ENCODE measurements at regions of chr20 and their contacts with region 1.

Region 1: DNA sequence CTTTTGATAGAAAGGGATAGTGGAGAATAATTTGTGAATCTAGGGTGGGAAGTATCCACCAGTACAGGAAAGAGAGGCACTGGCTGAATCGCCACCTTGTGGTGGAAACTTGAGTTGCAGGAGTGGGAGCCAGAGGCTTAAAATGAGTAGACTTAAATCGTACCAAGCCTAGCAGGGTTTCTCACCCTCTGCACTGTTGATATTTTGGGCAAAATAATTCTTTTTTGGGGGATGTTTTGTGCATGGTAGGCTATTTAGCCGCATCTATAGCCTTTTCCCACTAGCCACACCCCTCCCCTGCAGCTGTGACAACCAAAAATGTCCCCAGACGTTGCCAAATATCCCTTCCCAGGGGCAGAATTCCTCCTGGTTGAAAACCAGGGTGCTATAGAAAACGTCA is 119.1 kb downstream of the DHX35 start:
- DNase-seq: peak; percentile 59 to 87 (median 80)
- ATAC-seq: peak; percentile 76
- H3K4me3 ChIP-seq: no peak overlapping the region
- H3K4me3 Mint-ChIP-seq: no peak overlapping the region
- H3K27ac ChIP-seq: no peak overlapping the region
- H3K27ac Mint-ChIP-seq: no peak overlapping the region
- H3K4me1 ChIP-seq: no peaks in the 10 kb centered on the region
- H3K4me1 Mint-ChIP-seq: peaks cover 6% of the 10 kb centered on the region
- H3K27me3 ChIP-seq: no peaks in the 10 kb centered on the region
- H3K27me3 Mint-ChIP-seq: peaks cover 23% of the 10 kb centered on the region
- CTCF ChIP-seq: peak; percentile 82

Region 2: DNA sequence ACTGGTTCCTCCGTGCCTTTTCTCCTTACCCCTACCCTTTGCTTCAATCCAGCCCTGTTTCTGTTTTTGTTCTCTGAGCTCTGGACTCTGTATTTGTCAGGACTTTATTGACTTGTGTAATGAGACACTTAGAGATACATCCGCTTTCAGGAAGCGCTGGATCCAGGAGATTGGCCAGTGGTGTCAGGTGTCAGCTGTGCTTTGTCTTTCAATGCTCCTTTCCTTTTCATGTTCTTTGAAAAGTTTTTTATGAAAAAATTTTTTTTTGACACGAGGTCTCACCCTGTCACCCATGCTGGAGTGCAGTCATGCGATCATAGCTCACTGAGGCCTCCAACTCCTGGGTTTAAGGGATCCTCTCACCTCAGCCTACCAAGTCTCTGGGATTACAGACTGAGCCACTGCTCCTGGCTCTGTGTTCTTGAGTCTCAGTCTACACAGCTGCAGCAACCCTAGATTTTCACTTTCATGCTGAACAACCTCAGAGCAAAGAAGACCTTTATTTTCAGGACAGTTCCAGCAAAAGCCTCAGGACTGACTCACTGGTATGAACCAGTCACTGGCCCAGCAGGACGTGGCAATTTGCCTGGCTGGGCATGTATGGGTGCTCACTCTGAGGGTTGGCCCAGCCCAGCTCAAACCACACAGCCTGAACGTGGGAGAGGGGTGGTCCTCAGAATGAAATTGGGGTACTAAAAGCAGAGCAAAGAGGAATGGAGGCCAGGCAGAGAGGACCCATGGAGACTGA is 10.6 kb before region 1 on chr20:
- CTCF ChIA-PET with region 1: interaction called, 33 read pairs
- POLR2A ChIA-PET with region 1: no interaction called
- intact Hi-C with region 1: no loop called
- DNase-seq: no peak
- ATAC-seq: no peak
- H3K4me3 ChIP-seq: no peak overlapping the region
- H3K4me3 Mint-ChIP-seq: no peak overlapping the region
- H3K27ac ChIP-seq: no peak overlapping the region
- H3K27ac Mint-ChIP-seq: no peak overlapping the region
- H3K4me1 ChIP-seq: no peaks in the 10 kb centered on the region
- H3K4me1 Mint-ChIP-seq: no peaks in the 10 kb centered on the region
- H3K27me3 ChIP-seq: no peaks in the 10 kb centered on the region
- H3K27me3 Mint-ChIP-seq: peaks cover 22% of the 10 kb centered on the region
- CTCF ChIP-seq: no peak

Region 3: GRCh38 chr20:39190666-39191570 is 109.7 kb after region 1 on chr20:
- CTCF ChIA-PET with region 1: no interaction called
- POLR2A ChIA-PET with region 1: no interaction called
- intact Hi-C with region 1: no loop called
- DNase-seq: no peak
- ATAC-seq: no peak
- H3K4me3 ChIP-seq: no peak overlapping the region
- H3K4me3 Mint-ChIP-seq: no peak overlapping the region
- H3K27ac ChIP-seq: no peak overlapping the region
- H3K27ac Mint-ChIP-seq: no peak overlapping the region
- H3K4me1 ChIP-seq: no peaks in the 10 kb centered on the region
- H3K4me1 Mint-ChIP-seq: no peaks in the 10 kb centered on the region
- H3K27me3 ChIP-seq: no peaks in the 10 kb centered on the region
- H3K27me3 Mint-ChIP-seq: peaks cover 11% of the 10 kb centered on the region
- CTCF ChIP-seq: no peak